ENCODE measurements at regions of chr22 and their contacts with region 1.

Region 1: DNA sequence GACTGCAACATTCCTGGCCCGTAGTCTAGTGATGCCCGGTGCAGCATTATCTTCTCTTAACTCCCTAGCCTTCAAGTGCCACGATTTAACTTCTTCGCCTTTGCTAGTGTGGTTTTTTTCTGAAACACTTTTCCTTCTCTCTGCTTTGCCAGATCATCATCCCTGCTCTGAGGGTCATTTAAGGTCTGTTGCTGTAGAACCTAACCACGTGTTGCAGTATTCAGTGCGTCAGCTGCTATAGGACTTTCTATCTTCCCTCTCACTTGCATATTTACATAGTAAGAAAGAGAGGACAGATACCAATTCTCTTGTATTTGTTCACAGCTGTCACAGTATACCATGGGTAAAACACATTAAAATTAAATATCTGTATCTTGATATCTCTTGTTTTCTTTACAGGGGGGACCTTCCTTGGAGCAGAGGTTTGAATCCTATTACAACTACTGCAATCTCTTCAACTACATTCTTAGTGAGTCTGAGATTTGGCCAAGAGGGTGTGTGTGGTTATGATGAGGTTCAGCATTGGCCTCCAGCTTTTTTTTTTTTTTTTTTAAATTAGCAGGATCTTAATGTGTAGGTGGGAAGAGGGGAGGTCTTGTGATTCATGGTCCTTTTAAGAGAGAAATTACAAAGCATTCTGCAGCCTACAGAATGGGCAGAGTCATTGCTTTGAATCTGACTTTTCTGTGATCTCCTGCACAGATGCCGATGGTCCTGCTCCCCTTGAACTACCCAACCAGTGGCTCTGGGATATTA is 13.5 kb downstream of the EIF3L start:
- DNase-seq: no peak
- H3K4me3 ChIP-seq: no peak overlapping the region
- H3K27ac ChIP-seq: no peak overlapping the region
- H3K4me1 ChIP-seq: no peaks in the 10 kb centered on the region
- CTCF ChIP-seq: no peak

Region 2: GRCh38 chr22:37817705-37818408 is 44.9 kb before region 1 on chr22:
- CTCF ChIA-PET with region 1: interaction called, 3 read pairs
- POLR2A ChIA-PET with region 1: interaction called, 5 read pairs
- intact Hi-C with region 1: loop called (anchors 1 kb)
- DNase-seq: peak; percentile 76
- H3K4me3 ChIP-seq: no peak overlapping the region
- H3K27ac ChIP-seq: no peak overlapping the region
- H3K4me1 ChIP-seq: no peaks in the 10 kb centered on the region
- CTCF ChIP-seq: peak; percentile 86